GM18951 (cell line): ENCODE measurements at regions of chr1 and their contacts with region 1.

Region 1: GRCh38 chr1:47710329-47711071 is 272.7 kb downstream of the FOXD2 start:
- POLR2A ChIP-seq: no peak

Region 2: DNA sequence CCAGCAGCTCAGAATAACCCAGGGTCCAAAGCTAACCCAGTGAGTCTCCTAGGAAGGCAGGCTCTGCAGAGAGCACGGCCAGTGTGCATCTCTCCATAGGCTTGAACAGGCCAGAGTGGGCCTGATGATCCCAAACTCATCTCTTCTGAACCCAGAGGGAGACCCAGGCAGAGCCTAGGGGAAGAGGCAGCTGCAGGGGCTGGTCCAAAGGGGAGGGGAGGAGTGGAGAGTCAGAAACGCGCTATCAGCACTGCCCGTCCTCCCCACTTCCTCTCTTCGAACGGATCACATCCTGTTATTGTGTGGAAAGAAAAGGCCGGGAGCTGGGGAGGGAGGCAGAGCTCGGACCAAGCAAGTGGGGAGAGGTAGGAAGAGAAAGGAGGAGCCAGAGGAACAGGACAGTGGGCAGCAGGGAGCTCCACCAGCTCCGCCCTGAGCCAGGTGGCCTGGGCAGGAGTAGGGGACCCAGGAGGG is 498.7 kb before region 1 on chr1:
- in situ Hi-C with region 1: loop called (anchors 25 kb)
- POLR2A ChIP-seq: no peak

Region 3: GRCh38 chr1:47432071-47433036 is 278.1 kb before region 1 on chr1:
- in situ Hi-C with region 1: loop called (anchors 5 kb)
- POLR2A ChIP-seq: no peak

Region 4: GRCh38 chr1:47587891-47588582 is 122.5 kb before region 1 on chr1:
- in situ Hi-C with region 1: no loop called
- POLR2A ChIP-seq: no peak

Region 5: DNA sequence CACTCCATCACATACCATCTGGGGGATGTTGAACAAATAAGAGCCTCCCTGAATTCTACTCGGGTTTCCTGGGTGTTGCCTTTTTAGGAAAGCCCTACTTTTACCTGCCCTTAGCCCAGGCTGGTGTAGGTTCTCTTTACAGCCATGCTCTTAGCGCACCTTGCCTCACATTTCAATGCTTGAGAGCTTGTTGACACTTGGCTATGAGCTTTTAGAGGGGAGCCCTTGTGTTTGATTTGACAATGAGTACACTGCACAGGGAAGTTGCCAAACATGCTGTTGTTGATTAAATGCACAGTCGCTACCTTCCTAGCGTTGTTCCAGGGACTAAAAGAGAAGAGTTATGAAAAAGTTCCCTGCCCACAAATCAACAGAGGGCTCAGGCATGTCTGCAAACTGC is 182.9 kb after region 1 on chr1:
- in situ Hi-C with region 1: no loop called
- POLR2A ChIP-seq: no peak

Region 6: GRCh38 chr1:47918257-47918867 is 207.9 kb after region 1 on chr1:
- in situ Hi-C with region 1: no loop called
- POLR2A ChIP-seq: no peak

Region 7: DNA sequence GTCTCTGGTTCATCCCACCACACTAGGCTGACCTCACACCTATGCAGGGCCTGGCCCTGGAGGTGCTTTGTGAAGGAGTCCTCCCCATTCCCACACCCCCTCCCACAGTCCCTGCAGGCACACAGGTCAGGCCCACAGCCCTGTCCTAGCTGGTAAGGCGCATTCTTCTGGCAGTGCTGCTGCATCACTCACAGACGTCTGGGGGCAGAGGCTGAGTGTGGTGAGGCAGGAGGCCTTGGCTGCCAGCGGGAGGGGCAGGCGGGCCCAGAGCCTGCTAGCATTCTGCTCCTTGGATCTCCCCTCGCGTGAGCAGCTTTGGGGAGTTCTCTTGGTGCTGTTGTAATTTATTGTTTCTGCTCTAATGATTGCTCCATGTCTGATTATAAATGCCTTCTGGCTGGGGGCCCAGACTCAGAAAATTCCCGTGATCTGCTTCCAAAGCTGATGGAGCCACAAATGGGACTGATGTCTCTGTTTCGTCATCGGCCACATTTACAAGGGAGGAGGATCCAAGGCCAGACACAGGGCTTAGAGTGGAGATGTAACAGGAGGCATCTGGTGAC is 223.8 kb after region 1 on chr1:
- in situ Hi-C with region 1: no loop called
- POLR2A ChIP-seq: no peak